ENCODE measurements at regions of chr12 and their contacts with region 1.

Region 1: GRCh38 chr12:10749700-10750384 is 26.7 kb upstream of the YBX3 start:
- DNase-seq: peak; percentile 74
- H3K4me3 ChIP-seq: peak overlapping the region; percentile 22
- H3K27me3 ChIP-seq: no peaks in the 10 kb centered on the region; the same call in 1 of the 2 replicates
- CTCF ChIP-seq: peak; percentile 86; the same call in 1 of the 2 replicates

Region 2: DNA sequence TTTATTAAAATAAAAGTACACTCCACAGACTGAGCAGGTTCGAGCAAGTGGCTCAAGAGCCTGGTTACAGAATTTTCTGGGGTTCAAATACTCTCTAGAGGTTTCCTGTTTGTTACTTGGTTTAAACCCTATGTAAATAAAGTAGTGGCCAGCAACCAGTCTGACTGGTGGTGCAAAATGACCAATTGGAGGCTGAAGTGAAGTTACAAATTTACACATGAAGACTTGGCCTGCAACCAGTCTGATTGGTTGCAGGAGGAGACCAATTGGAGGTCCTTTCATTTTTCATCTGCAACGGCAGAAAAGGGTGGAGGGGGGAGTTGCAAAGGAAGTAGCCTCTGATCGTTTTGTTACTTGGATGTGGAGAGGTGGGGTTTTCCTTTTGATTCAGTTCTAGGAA is 72.2 kb before region 1 on chr12:
- CTCF ChIA-PET with region 1: interaction called, 12 read pairs
- POLR2A ChIA-PET with region 1: no interaction called
- DNase-seq: no peak
- H3K4me3 ChIP-seq: no peak overlapping the region
- H3K27me3 ChIP-seq: no peaks in the 10 kb centered on the region
- CTCF ChIP-seq: no peak

Region 3: GRCh38 chr12:10709808-10710207 is 40.0 kb before region 1 on chr12:
- CTCF ChIA-PET with region 1: interaction called, 11 read pairs
- POLR2A ChIA-PET with region 1: no interaction called
- DNase-seq: no peak
- H3K4me3 ChIP-seq: no peak overlapping the region
- H3K27me3 ChIP-seq: no peaks in the 10 kb centered on the region
- CTCF ChIP-seq: no peak

Region 4: DNA sequence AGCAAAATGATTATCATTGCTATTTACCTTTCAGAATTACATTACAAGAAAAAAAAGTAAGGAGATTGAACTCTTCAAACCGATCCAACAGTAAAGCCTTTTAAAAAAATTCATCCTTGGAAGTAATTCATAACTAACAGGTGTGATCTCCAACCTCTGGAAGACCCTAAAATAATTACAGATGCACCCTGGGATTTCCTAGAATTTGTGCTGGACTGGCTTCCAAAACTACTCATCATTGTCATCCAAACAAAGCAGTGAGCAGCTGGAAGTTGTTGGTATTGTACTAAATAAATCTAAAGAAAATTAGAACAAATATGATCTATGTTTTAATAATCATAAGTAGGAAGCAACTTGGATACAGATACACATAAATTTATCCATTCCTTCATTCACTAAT is 24.8 kb before region 1 on chr12:
- CTCF ChIA-PET with region 1: interaction called, 10 read pairs
- POLR2A ChIA-PET with region 1: no interaction called
- DNase-seq: no peak
- H3K4me3 ChIP-seq: no peak overlapping the region
- H3K27me3 ChIP-seq: peaks cover 6% of the 10 kb centered on the region
- CTCF ChIP-seq: no peak

Region 5: DNA sequence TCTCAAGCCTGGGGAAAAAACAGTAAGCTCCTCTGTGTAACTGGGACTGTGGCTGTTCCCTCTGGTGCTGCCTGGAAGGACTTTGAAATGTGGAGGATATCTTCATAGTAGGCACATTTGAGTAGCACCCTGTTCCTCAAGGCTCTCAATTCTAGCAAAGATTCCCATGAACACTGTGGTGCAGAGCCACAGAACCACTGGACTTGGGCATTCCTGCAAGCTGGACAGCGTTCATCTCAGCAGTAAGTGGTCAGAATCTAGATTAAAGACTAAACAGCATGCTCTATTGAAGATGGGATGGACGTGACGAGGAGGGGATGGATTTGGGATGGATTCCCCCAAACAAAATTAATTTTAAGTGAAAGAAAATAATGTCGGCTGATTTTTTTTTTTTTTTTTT is 17.3 kb before region 1 on chr12:
- CTCF ChIA-PET with region 1: interaction called, 14 read pairs
- POLR2A ChIA-PET with region 1: no interaction called
- DNase-seq: no peak
- H3K4me3 ChIP-seq: no peak overlapping the region
- H3K27me3 ChIP-seq: peaks cover 19% of the 10 kb centered on the region
- CTCF ChIP-seq: no peak

Measured in BJ (cell line).